ENCODE measurements at regions of chr15 and their contacts with region 1.

Region 1: GRCh38 chr15:63402498-63403253 is 21.0 kb upstream of the CA12 start:
- DNase-seq: peak; percentile 55
- ATAC-seq: peak; percentile 36
- H3K4me3 ChIP-seq: no peak overlapping the region
- H3K4me3 Mint-ChIP-seq: no peak overlapping the region
- H3K27ac ChIP-seq: no peak overlapping the region
- H3K27ac Mint-ChIP-seq: no peak overlapping the region
- H3K4me1 ChIP-seq: peaks cover 0 to 4% of the 10 kb centered on the region in 2 donors
- H3K4me1 Mint-ChIP-seq: peaks cover 11% of the 10 kb centered on the region
- H3K27me3 ChIP-seq: no peaks in the 10 kb centered on the region
- H3K27me3 Mint-ChIP-seq: peaks cover 5% of the 10 kb centered on the region
- CTCF ChIP-seq: peak; percentile 70

Region 2: GRCh38 chr15:63093486-63094205 is 309.0 kb before region 1 on chr15:
- CTCF ChIA-PET with region 1: interaction called, 3 read pairs
- POLR2A ChIA-PET with region 1: no interaction called
- intact Hi-C with region 1: loop called (anchors 1 kb)
- DNase-seq: peak; percentile 72
- ATAC-seq: peak; percentile 75
- H3K4me3 ChIP-seq: no peak overlapping the region
- H3K4me3 Mint-ChIP-seq: no peak overlapping the region
- H3K27ac ChIP-seq: no peak overlapping the region
- H3K27ac Mint-ChIP-seq: no peak overlapping the region
- H3K4me1 ChIP-seq: peaks cover 0 to 4% of the 10 kb centered on the region in 2 donors
- H3K4me1 Mint-ChIP-seq: peaks cover 2% of the 10 kb centered on the region
- H3K27me3 ChIP-seq: no peaks in the 10 kb centered on the region
- H3K27me3 Mint-ChIP-seq: no peaks in the 10 kb centered on the region
- CTCF ChIP-seq: peak; percentile 79

Region 3: DNA sequence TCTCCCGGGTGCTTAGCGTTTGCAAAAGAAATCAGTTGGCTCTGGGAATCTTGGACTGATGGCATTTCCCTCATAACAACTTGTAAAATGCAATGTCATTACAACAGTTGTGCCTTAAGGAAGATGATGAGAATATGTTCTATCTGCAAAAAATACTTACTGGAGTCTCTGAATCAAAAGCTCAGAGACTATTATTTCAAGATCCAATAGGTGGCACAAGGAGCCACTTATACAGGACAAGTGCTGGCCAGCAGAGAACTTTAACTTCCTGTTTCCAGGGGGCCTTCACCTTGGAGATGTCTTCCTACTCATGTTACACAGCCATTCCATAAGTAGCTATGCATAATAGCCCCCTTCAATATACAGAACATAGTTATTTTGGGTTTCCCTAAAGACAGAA is 236.5 kb before region 1 on chr15:
- CTCF ChIA-PET with region 1: interaction called, 8 read pairs
- POLR2A ChIA-PET with region 1: no interaction called
- intact Hi-C with region 1: loop called (anchors 2 kb)
- DNase-seq: peak; percentile 25
- ATAC-seq: no peak
- H3K4me3 ChIP-seq: no peak overlapping the region
- H3K4me3 Mint-ChIP-seq: no peak overlapping the region
- H3K27ac ChIP-seq: no peak overlapping the region
- H3K27ac Mint-ChIP-seq: no peak overlapping the region
- H3K4me1 ChIP-seq: peaks cover 3 to 14% of the 10 kb centered on the region in 2 donors
- H3K4me1 Mint-ChIP-seq: peaks cover 10% of the 10 kb centered on the region
- H3K27me3 ChIP-seq: no peaks in the 10 kb centered on the region
- H3K27me3 Mint-ChIP-seq: no peaks in the 10 kb centered on the region
- CTCF ChIP-seq: no peak

Region 4: GRCh38 chr15:63288778-63289378 is 113.8 kb before region 1 on chr15:
- CTCF ChIA-PET with region 1: interaction called, 40 read pairs
- POLR2A ChIA-PET with region 1: no interaction called
- intact Hi-C with region 1: loop called (anchors 1 kb)
- DNase-seq: peak; percentile 61
- ATAC-seq: no peak
- H3K4me3 ChIP-seq: no peak overlapping the region
- H3K4me3 Mint-ChIP-seq: no peak overlapping the region
- H3K27ac ChIP-seq: no peak overlapping the region
- H3K27ac Mint-ChIP-seq: no peak overlapping the region
- H3K4me1 ChIP-seq: peaks cover 5 to 8% of the 10 kb centered on the region in 2 donors
- H3K4me1 Mint-ChIP-seq: peaks cover 11% of the 10 kb centered on the region
- H3K27me3 ChIP-seq: no peaks in the 10 kb centered on the region
- H3K27me3 Mint-ChIP-seq: no peaks in the 10 kb centered on the region
- CTCF ChIP-seq: peak; percentile 82

Region 5: DNA sequence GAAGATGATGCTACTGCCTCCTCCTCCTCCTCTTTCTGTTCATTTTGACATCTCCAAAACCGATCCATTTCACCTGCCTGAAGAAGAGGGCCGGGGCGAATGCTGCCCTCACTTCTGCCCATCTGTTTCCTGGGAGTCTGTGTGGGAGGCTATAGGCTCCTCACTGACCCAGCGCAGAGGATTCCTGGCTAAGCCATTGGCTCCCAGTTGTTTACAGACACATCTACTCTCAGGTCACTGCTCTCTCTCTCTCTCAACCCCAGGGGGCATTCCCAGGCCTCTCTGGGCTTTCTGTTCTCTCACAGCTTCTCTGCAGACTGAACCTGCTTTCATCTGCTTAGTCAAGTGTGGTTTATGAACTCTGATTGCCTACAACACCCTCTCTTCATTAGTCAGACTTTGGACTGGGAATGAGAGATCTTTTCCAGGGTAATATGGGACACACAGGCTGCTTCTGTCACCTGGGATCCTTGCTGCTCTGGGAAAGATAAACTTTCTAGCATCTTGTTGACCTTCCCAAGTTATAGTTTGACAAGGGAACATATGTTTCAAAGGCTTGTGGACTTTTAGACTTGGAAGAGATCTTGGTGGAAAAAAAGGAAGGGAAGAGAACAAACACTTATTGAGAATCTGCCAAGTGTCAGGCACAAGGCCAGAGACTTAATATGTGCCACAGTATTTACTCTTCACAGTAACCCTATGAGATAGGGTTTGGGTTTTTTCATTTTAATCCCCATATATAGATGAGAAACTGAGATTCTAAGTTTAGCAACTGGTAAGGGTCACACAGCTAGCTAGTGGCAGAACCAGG is 71.5 kb after region 1 on chr15:
- CTCF ChIA-PET with region 1: no interaction called
- POLR2A ChIA-PET with region 1: no interaction called
- intact Hi-C with region 1: no loop called
- DNase-seq: peak; percentile 85
- ATAC-seq: peak; percentile 69
- H3K4me3 ChIP-seq: peak overlapping the region in 4 of 5 experiments; percentile 4 to 38 (median 30)
- H3K4me3 Mint-ChIP-seq: peak overlapping the region; percentile 83
- H3K27ac ChIP-seq: peak overlapping the region; percentile 90 to 95
- H3K27ac Mint-ChIP-seq: peak overlapping the region; percentile 97
- H3K4me1 ChIP-seq: peaks cover 59 to 64% of the 10 kb centered on the region in 2 donors
- H3K4me1 Mint-ChIP-seq: peaks cover 69% of the 10 kb centered on the region
- H3K27me3 ChIP-seq: no peaks in the 10 kb centered on the region
- H3K27me3 Mint-ChIP-seq: no peaks in the 10 kb centered on the region
- CTCF ChIP-seq: peak; percentile 25

Measured in B cell (primary cell).